H1 (cell line): ENCODE measurements at regions of chr20 and their contacts with region 1.

Region 1: GRCh38 chr20:5191829-5192569 is 65.2 kb downstream of the CDS2 start:
- DNase-seq: no peak
- H3K4me3 ChIP-seq: no peak overlapping the region
- H3K27ac ChIP-seq: peak overlapping the region; percentile 47; the same call in 1 of the 2 replicates
- H3K4me1 ChIP-seq: peaks cover 0 to 4% (median 0%) of the 10 kb centered on the region in 4 experiments; a peak in 3 of 7 replicates
- H3K27me3 ChIP-seq: no peaks in the 10 kb centered on the region
- CTCF ChIP-seq: peak in 2 of 3 experiments; percentile 63 to 73; a peak in 3 of 4 replicates
- EP300 ChIP-seq: no peak
- POLR2A ChIP-seq: no peak
- RAD21 ChIP-seq: peak; percentile 89 to 91

Region 2: DNA sequence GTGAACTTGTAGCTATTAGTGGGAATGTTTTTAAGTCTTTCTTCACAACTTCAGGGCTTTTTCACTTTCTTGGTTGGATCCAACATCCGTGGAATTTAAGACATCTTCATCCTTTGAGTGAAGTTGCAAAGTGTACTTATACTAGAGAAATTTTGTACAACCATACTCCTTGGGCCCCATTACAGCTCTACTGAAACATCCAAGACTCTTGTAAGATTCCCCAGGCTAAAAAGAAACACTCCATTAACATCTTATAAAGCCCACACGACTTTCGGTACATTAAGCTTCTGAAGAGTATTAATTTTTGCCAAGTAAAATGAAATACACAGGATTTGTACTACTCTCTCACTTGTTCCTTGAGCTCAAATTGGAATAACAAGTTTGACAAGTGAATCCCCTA is 77.6 kb before region 1 on chr20:
- CTCF ChIA-PET with region 1: interaction called, 12 read pairs
- POLR2A ChIA-PET with region 1: interaction called, 25 read pairs
- DNase-seq: no peak
- H3K4me3 ChIP-seq: no peak overlapping the region
- H3K27ac ChIP-seq: no peak overlapping the region
- H3K4me1 ChIP-seq: no peaks in the 10 kb centered on the region; a peak in 1 of 7 replicates
- H3K27me3 ChIP-seq: no peaks in the 10 kb centered on the region
- CTCF ChIP-seq: no peak
- EP300 ChIP-seq: no peak
- POLR2A ChIP-seq: peak in 1 of 2 experiments; percentile 69; a peak in 2 of 3 replicates
- RAD21 ChIP-seq: no peak

Region 3: DNA sequence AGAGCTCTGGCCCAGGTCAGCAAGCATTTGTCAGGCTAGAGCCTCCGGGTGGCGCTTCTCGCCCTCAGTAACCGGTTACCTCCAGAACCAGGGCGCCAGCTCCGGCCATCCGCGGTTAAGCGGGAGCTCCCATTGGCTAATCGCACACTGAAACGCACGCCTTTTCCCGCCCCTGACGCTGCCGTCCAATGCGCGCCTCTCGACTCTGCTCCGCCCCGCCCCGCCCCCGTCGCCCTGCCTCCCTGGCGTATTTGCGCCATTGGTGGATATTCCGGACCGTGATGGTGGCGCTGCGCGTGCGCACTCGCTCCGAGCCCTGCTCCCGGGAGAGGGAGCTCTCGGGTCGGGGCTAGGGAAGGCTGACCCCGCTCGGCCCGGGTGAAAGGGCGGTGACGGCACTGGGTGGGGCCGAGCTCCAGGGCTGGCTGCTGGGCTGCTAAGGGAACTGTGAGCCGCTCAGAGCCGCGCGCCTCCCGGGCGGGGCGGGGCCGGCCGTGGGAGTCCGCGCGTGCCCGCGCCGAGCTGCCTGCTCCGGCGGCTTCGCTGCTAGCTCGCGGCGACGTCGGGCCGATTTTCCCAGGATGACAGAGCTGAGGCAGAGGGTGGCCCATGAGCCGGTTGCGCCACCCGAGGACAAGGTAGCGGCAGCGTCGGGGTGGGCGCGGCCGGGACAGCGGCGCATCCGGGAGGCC is 65.3 kb before region 1 on chr20 and contains the start of gene CDS2:
- CTCF ChIA-PET with region 1: interaction called, 122 read pairs
- POLR2A ChIA-PET with region 1: interaction called, 7 read pairs
- DNase-seq: peak; percentile 98 to 100
- H3K4me3 ChIP-seq: peak within 1 kb of the TSS; percentile 74 to 86 (median 83)
- H3K27ac ChIP-seq: peak within 1 kb of the TSS; percentile 72
- H3K4me1 ChIP-seq: peaks cover 0 to 7% (median 2%) of the 10 kb centered on the region in 4 experiments; a peak in 2 of 7 replicates
- H3K27me3 ChIP-seq: no peaks in the 10 kb centered on the region
- CTCF ChIP-seq: peak; percentile 52 to 74 (median 60)
- EP300 ChIP-seq: no peak
- POLR2A ChIP-seq: peak in 1 of 2 experiments; percentile 75; a peak in 1 of 3 replicates
- RAD21 ChIP-seq: peak; percentile 48 to 58
- total RNA-seq, gene CDS2: 56.2 and 57.0 TPM in 2 replicates

Region 4: DNA sequence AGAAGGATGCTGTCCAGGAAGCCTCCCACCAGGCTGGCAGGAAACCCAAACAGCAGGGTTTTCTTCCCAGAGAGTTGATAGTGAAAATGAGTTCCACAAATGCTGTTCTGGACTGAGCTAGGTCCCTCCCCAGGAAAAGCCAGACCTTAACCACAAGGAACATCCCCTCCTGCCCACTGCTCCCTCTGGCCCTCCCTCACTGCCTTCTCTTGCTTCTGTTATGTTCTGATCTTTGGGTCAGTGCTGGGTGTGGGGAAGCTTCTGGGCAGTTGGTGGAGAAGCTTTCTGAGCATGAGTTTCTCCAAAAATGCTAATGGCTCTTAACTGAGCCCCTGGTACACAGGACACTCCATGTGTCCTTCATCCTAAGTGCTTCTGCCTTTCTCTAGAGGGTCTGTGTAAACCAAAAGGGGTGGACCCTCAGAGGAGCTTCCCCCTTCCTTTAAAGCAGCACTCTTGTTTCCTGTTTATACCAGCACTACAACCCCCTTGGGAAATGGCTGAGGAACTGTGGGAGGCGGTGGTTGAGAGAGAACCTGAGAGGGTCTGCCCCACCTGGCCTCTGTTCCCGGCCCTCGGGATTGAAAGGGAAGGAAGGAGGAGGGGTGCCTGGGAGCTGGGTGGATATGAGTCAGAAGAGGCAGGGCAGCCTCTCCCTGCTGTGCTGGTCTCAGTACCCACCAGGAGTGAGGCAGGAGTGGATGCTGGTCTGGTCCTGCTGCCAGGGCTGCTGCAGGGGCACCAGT is 23.2 kb before region 1 on chr20:
- CTCF ChIA-PET with region 1: interaction called, 17 read pairs
- POLR2A ChIA-PET with region 1: no interaction called
- DNase-seq: no peak
- H3K4me3 ChIP-seq: no peak overlapping the region
- H3K27ac ChIP-seq: no peak overlapping the region
- H3K4me1 ChIP-seq: peaks cover 8 to 24% (median 14%) of the 10 kb centered on the region in 4 experiments; a peak in 5 of 7 replicates
- H3K27me3 ChIP-seq: no peaks in the 10 kb centered on the region
- CTCF ChIP-seq: no peak
- EP300 ChIP-seq: no peak
- POLR2A ChIP-seq: no peak
- RAD21 ChIP-seq: no peak

Region 5: GRCh38 chr20:5205348-5206210 is 13.6 kb after region 1 on chr20:
- CTCF ChIA-PET with region 1: interaction called, 14 read pairs
- POLR2A ChIA-PET with region 1: interaction called, 3 read pairs
- DNase-seq: peak; percentile 53 to 86
- H3K4me3 ChIP-seq: no peak overlapping the region
- H3K27ac ChIP-seq: no peak overlapping the region
- H3K4me1 ChIP-seq: peaks cover 0 to 2% (median 0%) of the 10 kb centered on the region in 4 experiments; a peak in 1 of 7 replicates
- H3K27me3 ChIP-seq: no peaks in the 10 kb centered on the region
- CTCF ChIP-seq: peak; percentile 94 to 97 (median 97)
- EP300 ChIP-seq: no peak
- POLR2A ChIP-seq: no peak
- RAD21 ChIP-seq: peak; percentile 95 to 97

Region 6: DNA sequence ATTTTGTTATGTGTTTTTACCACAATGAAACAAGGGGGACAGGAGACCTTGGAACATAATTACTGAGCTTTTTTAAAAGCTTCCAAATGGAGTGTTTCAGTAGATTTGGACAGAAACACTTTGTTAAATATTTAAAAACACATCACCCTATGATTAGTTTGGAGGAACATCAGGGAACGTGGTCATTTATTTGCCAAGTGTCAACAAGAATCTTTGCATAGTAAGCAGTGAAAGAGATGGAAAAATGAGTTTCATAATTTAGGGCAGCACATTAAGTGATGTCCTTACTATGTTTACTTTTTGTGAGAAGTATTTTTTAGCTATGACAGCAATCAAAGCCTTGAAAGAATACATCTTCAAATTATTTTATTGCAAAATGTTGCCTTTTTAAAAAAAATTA is 42.2 kb after region 1 on chr20:
- CTCF ChIA-PET with region 1: no interaction called
- POLR2A ChIA-PET with region 1: no interaction called
- DNase-seq: no peak
- H3K4me3 ChIP-seq: no peak overlapping the region
- H3K27ac ChIP-seq: no peak overlapping the region
- H3K4me1 ChIP-seq: no peaks in the 10 kb centered on the region
- H3K27me3 ChIP-seq: no peaks in the 10 kb centered on the region
- CTCF ChIP-seq: no peak
- EP300 ChIP-seq: no peak
- POLR2A ChIP-seq: no peak
- RAD21 ChIP-seq: no peak